ENCODE measurements at regions of chr4 and their contacts with region 1.

Region 1: DNA sequence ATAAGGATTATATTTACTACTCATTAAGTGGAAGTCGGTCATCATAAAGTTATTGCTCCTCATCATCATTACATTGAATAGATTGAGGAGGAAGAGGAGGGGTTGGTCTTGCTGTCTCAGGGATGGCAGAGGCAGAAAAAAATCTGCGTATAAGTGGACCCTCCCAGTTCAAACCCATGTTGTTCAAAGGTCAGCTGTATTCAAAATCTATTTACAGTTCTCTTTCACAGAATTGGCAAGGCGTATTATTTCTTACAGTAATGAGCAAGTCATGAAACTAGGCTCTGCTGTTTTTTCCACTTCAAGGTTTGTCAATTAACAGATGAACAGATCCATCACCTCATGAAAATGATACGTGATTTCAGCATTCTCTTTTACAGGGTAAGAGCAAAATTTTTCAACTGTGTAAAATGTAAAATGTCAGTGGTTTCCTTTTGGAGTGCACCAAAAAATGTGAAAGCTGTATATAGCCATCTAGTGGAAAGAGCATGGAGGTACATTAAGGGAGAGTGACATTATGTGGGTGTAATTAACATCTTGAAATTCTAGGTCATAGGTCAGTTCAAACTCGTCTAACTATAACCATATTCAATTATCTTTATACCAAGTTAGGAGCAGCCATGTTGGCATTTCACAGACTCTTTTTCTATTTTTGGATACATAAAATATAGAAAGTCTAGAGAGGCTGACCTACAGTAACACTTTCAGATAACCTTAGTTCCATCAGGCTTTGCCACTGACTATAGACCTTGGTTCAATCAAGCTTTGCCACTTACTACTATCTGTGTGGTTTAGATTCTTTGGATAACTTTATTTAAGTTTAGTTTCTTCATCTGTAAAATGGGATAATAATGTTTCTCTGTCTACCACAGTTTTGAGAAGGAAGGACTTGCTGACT is 30.1 kb downstream of the NEIL3 start:
- DNase-seq: peak; percentile 33
- ATAC-seq: peak; percentile 63
- H3K4me3 ChIP-seq: no peak overlapping the region
- H3K4me3 Mint-ChIP-seq: no peak overlapping the region
- H3K27ac ChIP-seq: no peak overlapping the region
- H3K27ac Mint-ChIP-seq: no peak overlapping the region
- H3K4me1 ChIP-seq: no peaks in the 10 kb centered on the region
- H3K4me1 Mint-ChIP-seq: peaks cover 4% of the 10 kb centered on the region
- H3K27me3 ChIP-seq: no peaks in the 10 kb centered on the region
- H3K27me3 Mint-ChIP-seq: no peaks in the 10 kb centered on the region
- CTCF ChIP-seq: peak; percentile 65

Region 2: DNA sequence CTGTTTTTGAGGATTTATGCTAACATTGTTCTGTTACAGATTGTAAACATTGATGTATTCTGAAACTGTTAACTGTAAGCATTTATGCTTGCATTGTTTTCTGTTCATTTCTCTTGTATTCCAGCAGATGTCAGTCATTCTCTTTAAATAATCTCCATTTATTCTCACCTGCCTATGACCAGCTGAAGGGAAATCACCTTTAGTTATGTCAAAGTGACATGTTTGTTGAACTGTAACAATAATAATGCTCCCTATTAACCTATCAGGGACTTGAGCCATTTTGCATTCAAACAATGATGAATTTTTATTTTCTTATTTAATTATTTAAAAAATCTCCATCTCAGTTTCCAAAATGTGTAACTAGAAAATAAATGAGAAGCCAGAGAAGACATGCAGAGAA is 961.9 kb before region 1 on chr4:
- CTCF ChIA-PET with region 1: no interaction called
- POLR2A ChIA-PET with region 1: no interaction called
- intact Hi-C with region 1: loop called (anchors 5 kb)
- DNase-seq: peak; percentile 6
- ATAC-seq: no peak
- H3K4me3 ChIP-seq: no peak overlapping the region
- H3K4me3 Mint-ChIP-seq: no peak overlapping the region
- H3K27ac ChIP-seq: no peak overlapping the region
- H3K27ac Mint-ChIP-seq: no peak overlapping the region
- H3K4me1 ChIP-seq: no peaks in the 10 kb centered on the region
- H3K4me1 Mint-ChIP-seq: no peaks in the 10 kb centered on the region
- H3K27me3 ChIP-seq: no peaks in the 10 kb centered on the region
- H3K27me3 Mint-ChIP-seq: peaks cover 17% of the 10 kb centered on the region
- CTCF ChIP-seq: peak; percentile 37

Region 3: DNA sequence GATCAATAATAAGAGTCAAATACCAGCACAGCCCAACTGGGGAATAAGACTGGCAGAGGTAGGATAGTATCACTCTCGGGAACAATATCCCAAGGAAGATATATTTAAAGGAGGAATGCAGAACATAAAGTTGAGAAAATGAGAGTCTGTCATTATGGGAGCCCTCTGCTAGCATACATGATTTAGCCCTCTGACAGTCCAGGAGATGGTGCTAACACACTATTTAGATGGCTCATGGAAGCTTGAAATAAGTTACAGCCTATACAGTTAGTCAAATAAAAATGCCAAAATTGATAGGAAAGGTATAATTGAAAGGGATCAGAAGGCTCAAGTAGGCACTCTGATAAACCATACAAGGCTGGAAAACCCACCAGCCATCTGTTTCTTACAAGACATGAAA is 231.0 kb before region 1 on chr4:
- CTCF ChIA-PET with region 1: no interaction called
- POLR2A ChIA-PET with region 1: no interaction called
- intact Hi-C with region 1: no loop called
- DNase-seq: no peak
- ATAC-seq: no peak
- H3K4me3 ChIP-seq: no peak overlapping the region
- H3K4me3 Mint-ChIP-seq: no peak overlapping the region
- H3K27ac ChIP-seq: no peak overlapping the region
- H3K27ac Mint-ChIP-seq: no peak overlapping the region
- H3K4me1 ChIP-seq: no peaks in the 10 kb centered on the region
- H3K4me1 Mint-ChIP-seq: no peaks in the 10 kb centered on the region
- H3K27me3 ChIP-seq: no peaks in the 10 kb centered on the region
- H3K27me3 Mint-ChIP-seq: no peaks in the 10 kb centered on the region
- CTCF ChIP-seq: no peak

Region 4: GRCh38 chr4:177239878-177240277 is 99.8 kb before region 1 on chr4:
- CTCF ChIA-PET with region 1: no interaction called
- POLR2A ChIA-PET with region 1: no interaction called
- intact Hi-C with region 1: no loop called
- DNase-seq: no peak
- ATAC-seq: no peak
- H3K4me3 ChIP-seq: no peak overlapping the region
- H3K4me3 Mint-ChIP-seq: no peak overlapping the region
- H3K27ac ChIP-seq: no peak overlapping the region
- H3K27ac Mint-ChIP-seq: no peak overlapping the region
- H3K4me1 ChIP-seq: no peaks in the 10 kb centered on the region
- H3K4me1 Mint-ChIP-seq: no peaks in the 10 kb centered on the region
- H3K27me3 ChIP-seq: no peaks in the 10 kb centered on the region
- H3K27me3 Mint-ChIP-seq: no peaks in the 10 kb centered on the region
- CTCF ChIP-seq: no peak

Region 5: DNA sequence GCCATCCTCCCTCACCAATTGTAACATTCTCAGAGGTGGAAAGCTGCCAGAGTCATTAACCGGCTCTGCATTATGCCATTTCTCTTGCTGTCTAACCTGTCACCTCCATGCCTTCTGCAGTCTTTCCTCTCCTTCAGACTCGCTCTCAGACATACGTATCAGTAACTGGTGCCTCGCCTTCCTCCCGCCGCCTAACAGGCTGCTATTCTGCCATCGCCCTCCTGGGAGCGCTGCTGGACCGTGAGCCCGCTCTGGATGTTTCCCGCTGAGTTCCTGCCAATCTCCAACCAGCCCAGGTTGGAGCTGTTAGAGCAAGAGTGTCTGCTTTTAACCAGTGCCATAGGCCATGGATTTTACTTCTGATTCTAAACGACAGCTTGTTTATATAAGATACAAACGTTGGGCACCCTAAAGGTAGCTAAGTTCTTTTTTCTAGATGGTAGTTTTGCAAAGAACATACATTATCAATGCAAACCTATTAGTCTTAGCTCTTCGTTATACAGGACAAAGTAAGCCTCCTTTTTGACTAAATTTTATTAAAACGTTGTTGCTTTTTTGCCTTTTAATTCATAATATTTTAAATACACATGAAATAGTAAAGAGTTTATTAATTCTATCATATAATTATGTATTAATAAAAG is 89.5 kb before region 1 on chr4:
- CTCF ChIA-PET with region 1: no interaction called
- POLR2A ChIA-PET with region 1: no interaction called
- intact Hi-C with region 1: loop called (anchors 2 kb)
- DNase-seq: peak; percentile 25
- ATAC-seq: peak; percentile 49
- H3K4me3 ChIP-seq: no peak overlapping the region
- H3K4me3 Mint-ChIP-seq: no peak overlapping the region
- H3K27ac ChIP-seq: no peak overlapping the region
- H3K27ac Mint-ChIP-seq: no peak overlapping the region
- H3K4me1 ChIP-seq: no peaks in the 10 kb centered on the region
- H3K4me1 Mint-ChIP-seq: peaks cover 3% of the 10 kb centered on the region
- H3K27me3 ChIP-seq: peaks cover 0 to 3% (median 0%) of the 10 kb centered on the region in 4 experiments
- H3K27me3 Mint-ChIP-seq: peaks cover 7% of the 10 kb centered on the region
- CTCF ChIP-seq: peak; percentile 73